ENCODE measurements at regions of chr2 and their contacts with region 1.

Region 1: DNA sequence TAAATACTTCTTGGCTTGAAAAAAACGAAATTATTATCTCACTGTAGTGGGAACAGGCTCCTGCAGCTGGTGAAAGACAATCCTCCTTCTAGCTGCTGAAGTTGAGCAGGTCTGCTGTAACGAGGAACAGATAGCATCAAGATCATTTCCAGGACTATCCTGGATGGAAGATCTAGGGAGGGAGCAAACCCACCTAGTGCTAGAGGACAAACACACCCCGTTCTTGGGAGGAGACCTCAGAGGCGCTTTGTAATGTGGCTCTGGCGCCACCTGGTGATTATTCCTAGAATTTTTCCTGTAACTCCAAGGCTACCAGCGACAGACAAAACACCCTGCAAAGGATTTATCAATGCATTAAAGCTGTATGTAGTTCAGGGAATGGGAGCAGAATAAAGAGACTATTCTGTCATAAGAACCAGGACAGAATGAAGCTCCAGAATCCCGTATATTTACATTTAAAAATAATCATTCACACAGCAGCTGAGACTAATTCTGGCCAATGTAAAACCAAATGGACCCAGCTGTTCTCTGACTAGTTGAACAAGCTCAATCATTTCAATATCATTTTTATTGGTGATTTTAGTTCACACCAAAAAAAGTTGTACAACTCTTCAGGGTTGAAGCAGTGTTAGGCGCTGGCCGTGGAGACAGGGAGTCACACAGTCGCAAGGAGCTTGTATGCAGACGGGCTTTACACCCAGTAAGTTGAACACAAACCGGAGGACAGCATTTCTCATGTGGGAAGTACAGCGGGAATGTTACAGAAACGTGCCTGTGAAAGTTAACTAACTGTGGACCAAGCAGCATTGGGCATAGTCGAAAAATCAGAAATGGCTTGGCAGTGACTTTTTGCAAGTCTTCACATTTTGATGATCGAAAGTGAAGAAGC is 290.3 kb downstream of the TRIB2 start:
- DNase-seq: peak; percentile 90
- H3K4me3 ChIP-seq: peak overlapping the region; percentile 15
- H3K27ac ChIP-seq: no peak overlapping the region
- H3K4me1 ChIP-seq: peaks cover 35% of the 10 kb centered on the region
- H3K27me3 ChIP-seq: no peaks in the 10 kb centered on the region
- CTCF ChIP-seq: peak; percentile 78

Region 2: GRCh38 chr2:11583840-11584524 is 1423.1 kb before region 1 on chr2:
- CTCF ChIA-PET with region 1: no interaction called
- POLR2A ChIA-PET with region 1: no interaction called
- intact Hi-C with region 1: loop called (anchors 5 kb)
- DNase-seq: peak; percentile 93
- H3K4me3 ChIP-seq: no peak overlapping the region
- H3K27ac ChIP-seq: no peak overlapping the region
- H3K4me1 ChIP-seq: peaks cover 13% of the 10 kb centered on the region
- H3K27me3 ChIP-seq: no peaks in the 10 kb centered on the region
- CTCF ChIP-seq: peak; percentile 94

Region 3: DNA sequence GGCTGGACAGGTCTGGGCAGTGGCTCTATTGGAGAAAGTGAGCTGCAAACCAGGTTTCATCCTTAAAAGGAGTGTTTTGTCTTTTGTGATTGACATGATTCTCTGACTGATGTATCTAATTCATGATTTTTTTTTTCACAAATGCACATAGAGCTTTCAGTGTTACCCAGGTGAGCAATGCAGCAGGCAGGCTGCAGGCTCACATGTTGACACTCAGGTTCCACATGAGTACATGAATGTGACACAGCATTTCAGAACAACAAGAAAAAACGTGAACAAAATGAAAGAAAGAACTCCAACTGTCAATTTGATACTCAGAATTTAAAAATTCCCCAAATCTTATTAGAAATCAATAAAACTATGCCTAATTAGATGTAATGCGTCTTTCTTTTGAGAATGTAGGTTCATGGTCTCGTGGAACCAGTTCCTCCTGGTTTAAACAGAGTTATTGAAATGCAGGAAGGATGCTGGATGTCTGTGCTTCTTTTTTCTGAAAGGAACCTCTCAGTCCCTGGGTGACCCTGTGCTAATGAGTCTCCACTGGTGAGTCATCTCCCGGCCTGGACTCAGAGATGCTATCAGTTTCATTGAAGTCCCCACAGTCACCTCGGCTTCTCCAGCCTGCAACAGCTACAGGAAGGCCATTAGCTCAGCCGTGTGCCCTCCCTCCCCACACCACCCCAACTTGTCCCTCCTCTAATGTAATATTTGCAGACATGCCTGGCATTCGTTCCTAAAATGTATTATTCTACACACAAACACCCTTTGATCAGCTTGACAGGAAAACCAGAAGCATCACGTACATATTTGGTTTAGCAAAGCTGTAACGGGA is 830.2 kb before region 1 on chr2:
- CTCF ChIA-PET with region 1: no interaction called
- POLR2A ChIA-PET with region 1: no interaction called
- intact Hi-C with region 1: loop called (anchors 10 kb)
- DNase-seq: no peak
- H3K4me3 ChIP-seq: no peak overlapping the region
- H3K27ac ChIP-seq: no peak overlapping the region
- H3K4me1 ChIP-seq: no peaks in the 10 kb centered on the region
- H3K27me3 ChIP-seq: no peaks in the 10 kb centered on the region
- CTCF ChIP-seq: no peak

Region 4: GRCh38 chr2:12465631-12466135 is 541.4 kb before region 1 on chr2:
- CTCF ChIA-PET with region 1: interaction called, 8 read pairs
- POLR2A ChIA-PET with region 1: no interaction called
- intact Hi-C with region 1: loop called (anchors 5 kb)
- DNase-seq: peak; percentile 15
- H3K4me3 ChIP-seq: no peak overlapping the region
- H3K27ac ChIP-seq: peak overlapping the region; percentile 53
- H3K4me1 ChIP-seq: peaks cover 14% of the 10 kb centered on the region
- H3K27me3 ChIP-seq: no peaks in the 10 kb centered on the region
- CTCF ChIP-seq: no peak

Region 5: GRCh38 chr2:12716282-12717190 is 290.5 kb before region 1 on chr2 and contains the start of gene TRIB2:
- CTCF ChIA-PET with region 1: interaction called, 11 read pairs
- POLR2A ChIA-PET with region 1: no interaction called
- intact Hi-C with region 1: loop called (anchors 1 kb)
- DNase-seq: peak; percentile 95
- H3K4me3 ChIP-seq: peak within 1 kb of the TSS; percentile 87
- H3K27ac ChIP-seq: peak within 1 kb of the TSS; percentile 91
- H3K4me1 ChIP-seq: peaks cover 31% of the 10 kb centered on the region
- H3K27me3 ChIP-seq: no peaks in the 10 kb centered on the region
- CTCF ChIP-seq: 0 out of 2 replicates have a peak, but pooled peaks have one; percentile 10
- total RNA-seq, gene TRIB2: 92.3 and 100.0 TPM in 2 replicates

Region 6: DNA sequence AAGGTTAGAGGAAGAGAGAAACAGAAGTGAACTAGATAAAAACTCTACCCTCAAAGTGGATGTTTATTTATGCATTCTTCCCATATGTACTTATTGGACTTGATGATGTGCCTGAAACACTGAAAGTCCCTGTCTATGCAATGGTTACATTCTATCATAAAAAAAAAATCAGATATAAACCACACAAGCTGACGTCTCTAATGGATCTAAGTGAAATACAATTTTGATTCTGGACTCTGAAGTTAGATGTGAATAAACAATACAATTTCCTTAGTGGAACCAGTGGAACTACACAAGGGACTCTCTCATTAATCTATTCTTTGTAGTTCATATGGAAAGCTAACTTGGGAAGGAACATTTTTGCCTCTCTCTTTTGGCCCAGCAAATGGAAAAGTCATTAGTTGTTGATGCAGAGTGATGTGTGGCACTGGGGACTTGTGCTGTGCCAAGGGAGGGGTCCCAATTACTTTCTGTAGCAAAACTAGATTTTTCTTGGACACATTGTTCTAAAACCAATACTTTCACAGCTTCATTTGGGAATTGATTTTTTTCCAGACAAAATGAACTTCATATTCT is 86.4 kb after region 1 on chr2:
- CTCF ChIA-PET with region 1: no interaction called
- POLR2A ChIA-PET with region 1: no interaction called
- intact Hi-C with region 1: no loop called
- DNase-seq: no peak
- H3K4me3 ChIP-seq: no peak overlapping the region
- H3K27ac ChIP-seq: no peak overlapping the region
- H3K4me1 ChIP-seq: no peaks in the 10 kb centered on the region
- H3K27me3 ChIP-seq: no peaks in the 10 kb centered on the region
- CTCF ChIP-seq: no peak

Measured in A673 (cell line).